ENCODE measurements at regions of chr17 and their contacts with region 1.

Region 1: DNA sequence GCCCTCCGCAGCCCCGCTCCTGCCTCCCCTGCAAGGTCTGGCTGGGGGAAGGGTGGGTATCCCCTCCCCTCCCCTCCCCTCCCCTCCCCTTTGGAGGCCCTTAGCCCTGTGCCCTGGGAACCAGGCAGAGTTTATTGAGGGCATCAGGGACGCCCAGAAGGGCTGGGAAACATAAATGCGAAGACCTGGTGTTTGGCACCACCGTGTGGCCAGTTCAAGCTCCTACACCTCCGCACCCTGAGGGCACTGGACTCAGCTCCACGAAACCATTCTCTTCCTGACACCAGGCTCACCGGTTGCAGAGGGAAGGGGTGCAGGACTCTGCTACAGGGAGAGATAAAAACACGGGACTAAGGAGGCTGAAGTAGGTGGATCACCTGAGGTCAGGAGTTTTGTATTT is 1.0 kb upstream of the AIPL1 start:
- DNase-seq: peak; percentile 84
- CTCF ChIP-seq: peak; percentile 86

Region 2: DNA sequence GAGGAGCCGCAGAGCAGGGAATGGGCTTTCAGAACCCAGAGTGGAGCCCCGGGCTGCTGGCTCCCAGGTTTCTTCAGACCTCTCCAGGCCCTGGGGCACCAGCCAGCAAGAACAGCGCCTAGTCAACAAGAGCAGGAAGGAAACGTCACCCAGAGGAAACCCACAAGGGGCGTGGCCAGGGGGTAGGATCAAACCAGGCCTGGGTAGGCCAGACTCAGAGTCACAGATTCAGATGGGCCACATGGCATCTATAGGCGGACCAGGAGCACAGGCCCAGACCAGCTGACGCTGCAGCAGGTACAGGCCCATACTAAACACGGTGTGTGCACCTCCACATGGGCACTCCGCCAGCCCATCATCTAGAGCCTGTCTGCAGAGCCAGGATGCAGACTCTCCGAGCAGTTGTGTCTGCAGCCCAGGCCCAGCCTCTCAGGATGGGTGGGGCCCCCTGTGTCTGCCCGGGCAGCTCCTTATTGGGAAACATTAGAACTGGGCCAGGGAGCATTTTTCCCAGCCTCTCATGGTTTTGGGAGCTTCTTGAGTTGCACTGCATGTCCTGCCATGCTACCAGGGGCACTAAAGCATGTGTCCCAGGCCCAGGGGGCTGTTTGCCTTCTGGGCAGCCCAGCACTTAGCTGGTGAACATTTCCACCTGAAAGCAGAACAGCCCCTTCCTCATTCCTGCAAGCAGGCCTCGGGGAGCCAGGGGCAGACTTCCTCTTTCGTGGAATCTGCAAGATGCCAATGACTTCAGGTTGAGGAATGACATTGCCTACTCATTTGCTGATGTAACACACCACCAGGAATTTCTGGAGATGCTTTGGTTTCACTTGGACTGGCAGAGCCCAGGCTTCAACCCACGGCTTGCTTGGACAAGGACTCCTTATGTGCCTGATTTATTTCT is 851.3 kb before region 1 on chr17 and contains the start of gene NLRP1:
- CTCF ChIA-PET with region 1: interaction called, 13 read pairs
- POLR2A ChIA-PET with region 1: no interaction called
- DNase-seq: peak; percentile 93
- CTCF ChIP-seq: no peak

Region 3: GRCh38 chr17:6421700-6422604 is 14.0 kb before region 1 on chr17:
- CTCF ChIA-PET with region 1: interaction called, 32 read pairs
- POLR2A ChIA-PET with region 1: no interaction called
- DNase-seq: peak; percentile 85
- CTCF ChIP-seq: peak; percentile 87

Region 4: DNA sequence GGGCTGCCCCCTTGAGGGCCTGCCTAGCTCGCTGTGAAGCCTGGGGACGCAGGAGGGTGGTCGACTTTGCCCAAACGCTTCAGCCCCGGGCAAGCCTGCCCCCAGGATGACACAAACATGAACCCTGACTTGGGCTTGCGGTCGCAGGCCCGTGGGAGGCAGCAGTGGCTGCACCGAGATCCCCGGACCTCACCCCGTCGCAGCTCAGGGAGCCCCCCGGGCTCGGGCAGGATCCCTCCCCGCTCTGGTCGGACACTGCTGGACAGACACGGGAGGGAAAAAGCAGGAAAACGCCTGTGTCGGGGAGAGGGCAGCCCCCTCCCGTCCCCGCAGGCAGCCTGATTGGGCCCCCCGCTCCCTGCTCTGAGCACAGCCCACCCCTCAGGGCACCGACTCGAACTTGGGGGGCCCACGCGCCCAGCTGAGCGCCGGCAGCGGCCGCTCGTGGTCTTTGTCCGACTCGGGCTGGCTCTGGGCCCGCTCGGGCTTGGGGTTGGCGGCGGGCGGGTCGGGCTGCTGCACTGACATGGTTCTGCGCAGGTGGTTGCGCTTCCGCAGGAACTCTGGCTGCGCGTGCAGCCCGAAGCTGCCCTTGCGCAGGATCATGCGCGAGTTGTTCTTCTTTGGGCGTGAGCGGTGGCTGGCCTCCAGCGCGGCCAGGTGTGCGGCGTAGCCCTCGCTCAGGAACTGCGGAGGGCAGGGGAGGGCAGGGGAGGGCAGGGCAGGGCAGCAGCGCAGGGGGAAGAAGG is 19.2 kb after region 1 on chr17:
- CTCF ChIA-PET with region 1: interaction called, 51 read pairs
- POLR2A ChIA-PET with region 1: no interaction called
- DNase-seq: no peak
- CTCF ChIP-seq: no peak

Region 5: GRCh38 chr17:6477831-6478383 is 41.9 kb after region 1 on chr17:
- CTCF ChIA-PET with region 1: no interaction called
- POLR2A ChIA-PET with region 1: no interaction called
- DNase-seq: no peak
- CTCF ChIP-seq: no peak